PC-9 (cell line): ENCODE measurements at regions of chr5 and their contacts with region 1.

Region 1: GRCh38 chr5:170623576-170624181 is 119.9 kb downstream of the KCNIP1 start:
- DNase-seq: peak; percentile 26 to 44
- H3K4me3 ChIP-seq: no peak overlapping the region
- H3K27ac ChIP-seq: no peak overlapping the region
- H3K4me1 ChIP-seq: no peaks in the 10 kb centered on the region
- H3K27me3 ChIP-seq: no peaks in the 10 kb centered on the region
- CTCF ChIP-seq: peak; percentile 89

Region 2: GRCh38 chr5:169350759-169351240 is 1272.9 kb before region 1 on chr5:
- CTCF ChIA-PET with region 1: interaction called, 13 read pairs
- POLR2A ChIA-PET with region 1: no interaction called
- intact Hi-C with region 1: no loop called
- DNase-seq: peak; percentile 86 to 98
- H3K4me3 ChIP-seq: no peak overlapping the region
- H3K27ac ChIP-seq: peak overlapping the region; percentile 98
- H3K4me1 ChIP-seq: peaks cover 66% of the 10 kb centered on the region
- H3K27me3 ChIP-seq: no peaks in the 10 kb centered on the region
- CTCF ChIP-seq: no peak

Region 3: DNA sequence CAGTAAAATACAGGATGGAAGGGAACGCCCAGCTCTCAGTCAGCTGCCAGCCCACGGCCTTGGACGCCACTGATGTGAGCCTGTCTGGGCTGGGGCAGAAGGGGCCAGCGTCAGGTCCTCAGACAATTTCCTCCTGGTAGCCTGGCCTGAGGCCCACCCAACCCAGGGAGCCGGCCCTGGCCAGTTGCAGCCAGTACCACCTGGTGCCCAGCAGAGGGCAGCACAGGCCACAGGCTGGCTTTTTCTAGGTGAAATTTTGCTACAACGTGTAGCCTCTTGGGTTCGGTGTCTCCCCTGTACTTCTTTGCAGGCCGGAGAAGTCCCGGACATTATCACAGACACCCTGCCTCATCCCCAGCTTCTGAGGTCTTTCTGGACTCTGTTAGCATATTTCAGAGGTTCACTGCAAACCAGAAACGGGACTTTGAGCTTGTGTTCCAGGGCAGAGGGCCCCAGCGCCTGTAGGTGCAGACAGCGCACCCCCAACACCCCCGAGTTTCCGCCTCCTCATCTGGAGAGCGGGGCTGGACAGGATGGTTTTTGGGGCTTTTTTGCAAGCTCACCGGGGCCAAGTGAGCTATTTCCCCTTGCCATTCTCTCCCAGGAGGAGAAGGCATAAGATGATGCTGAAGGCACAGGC is 188.6 kb before region 1 on chr5:
- CTCF ChIA-PET with region 1: no interaction called
- POLR2A ChIA-PET with region 1: no interaction called
- intact Hi-C with region 1: loop called (anchors 1 kb)
- DNase-seq: peak; percentile 39 to 45
- H3K4me3 ChIP-seq: no peak overlapping the region
- H3K27ac ChIP-seq: no peak overlapping the region
- H3K4me1 ChIP-seq: no peaks in the 10 kb centered on the region
- H3K27me3 ChIP-seq: peaks cover 5% of the 10 kb centered on the region; the same call in 1 of the 2 replicates
- CTCF ChIP-seq: peak; percentile 95